Endothelial cell of umbilical vein (primary cell): ENCODE measurements at regions of chr1 and their contacts with region 1.

Region 1: GRCh38 chr1:84944767-84945486 is 51.9 kb upstream of the LPAR3 start:
- DNase-seq: peak; percentile 90
- H3K4me3 ChIP-seq: peak overlapping the region; percentile 37 to 72 (median 68)
- H3K27ac ChIP-seq: peak overlapping the region; percentile 20
- H3K4me1 ChIP-seq: peaks cover 5% of the 10 kb centered on the region
- H3K27me3 ChIP-seq: peaks cover 9 to 15% of the 10 kb centered on the region in 2 experiments
- CTCF ChIP-seq: peak; percentile 68 to 83
- POLR2A ChIP-seq: no peak

Region 2: DNA sequence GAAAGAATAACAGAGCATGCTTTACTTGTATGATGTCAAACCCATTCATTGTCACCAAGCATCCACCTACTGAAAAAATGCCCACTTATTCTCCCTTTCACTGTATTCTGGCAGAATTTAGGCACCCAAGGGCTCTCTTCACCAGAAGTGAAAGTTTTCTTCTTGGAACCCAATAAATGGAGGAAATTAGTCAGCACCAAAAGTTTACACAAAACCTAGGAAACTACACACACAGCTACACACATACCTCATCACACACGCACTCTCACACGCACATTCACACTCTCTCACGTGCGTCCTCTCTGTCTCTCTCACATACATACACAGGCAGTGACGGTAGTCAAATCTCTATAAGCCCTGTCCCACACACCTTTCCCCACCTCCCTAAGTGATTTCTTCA is 14.4 kb after region 1 on chr1:
- CTCF ChIA-PET with region 1: interaction called, 46 read pairs
- POLR2A ChIA-PET with region 1: no interaction called
- dilution Hi-C with region 1: no loop called
- intact Hi-C with region 1: no loop called
- DNase-seq: no peak
- H3K4me3 ChIP-seq: no peak overlapping the region
- H3K27ac ChIP-seq: no peak overlapping the region
- H3K4me1 ChIP-seq: no peaks in the 10 kb centered on the region
- H3K27me3 ChIP-seq: peaks cover 16 to 45% of the 10 kb centered on the region in 2 experiments
- CTCF ChIP-seq: no peak
- POLR2A ChIP-seq: no peak

Region 3: GRCh38 chr1:85027242-85027983 is 82.5 kb after region 1 on chr1:
- CTCF ChIA-PET with region 1: interaction called, 49 read pairs
- POLR2A ChIA-PET with region 1: no interaction called
- dilution Hi-C with region 1: no loop called
- intact Hi-C with region 1: loop called (anchors 2 kb)
- DNase-seq: no peak
- H3K4me3 ChIP-seq: no peak overlapping the region
- H3K27ac ChIP-seq: no peak overlapping the region
- H3K4me1 ChIP-seq: no peaks in the 10 kb centered on the region
- H3K27me3 ChIP-seq: peaks cover 0 to 2% of the 10 kb centered on the region in 2 experiments
- CTCF ChIP-seq: no peak
- POLR2A ChIP-seq: no peak

Region 4: GRCh38 chr1:85109475-85109874 is 164.5 kb after region 1 on chr1:
- CTCF ChIA-PET with region 1: interaction called, 27 read pairs
- POLR2A ChIA-PET with region 1: no interaction called
- dilution Hi-C with region 1: no loop called
- intact Hi-C with region 1: loop called (anchors 1 kb)
- DNase-seq: peak; percentile 71
- H3K4me3 ChIP-seq: no peak overlapping the region
- H3K27ac ChIP-seq: no peak overlapping the region
- H3K4me1 ChIP-seq: no peaks in the 10 kb centered on the region
- H3K27me3 ChIP-seq: peaks cover 8 to 23% of the 10 kb centered on the region in 2 experiments
- CTCF ChIP-seq: peak; percentile 65 to 80
- POLR2A ChIP-seq: no peak

Region 5: DNA sequence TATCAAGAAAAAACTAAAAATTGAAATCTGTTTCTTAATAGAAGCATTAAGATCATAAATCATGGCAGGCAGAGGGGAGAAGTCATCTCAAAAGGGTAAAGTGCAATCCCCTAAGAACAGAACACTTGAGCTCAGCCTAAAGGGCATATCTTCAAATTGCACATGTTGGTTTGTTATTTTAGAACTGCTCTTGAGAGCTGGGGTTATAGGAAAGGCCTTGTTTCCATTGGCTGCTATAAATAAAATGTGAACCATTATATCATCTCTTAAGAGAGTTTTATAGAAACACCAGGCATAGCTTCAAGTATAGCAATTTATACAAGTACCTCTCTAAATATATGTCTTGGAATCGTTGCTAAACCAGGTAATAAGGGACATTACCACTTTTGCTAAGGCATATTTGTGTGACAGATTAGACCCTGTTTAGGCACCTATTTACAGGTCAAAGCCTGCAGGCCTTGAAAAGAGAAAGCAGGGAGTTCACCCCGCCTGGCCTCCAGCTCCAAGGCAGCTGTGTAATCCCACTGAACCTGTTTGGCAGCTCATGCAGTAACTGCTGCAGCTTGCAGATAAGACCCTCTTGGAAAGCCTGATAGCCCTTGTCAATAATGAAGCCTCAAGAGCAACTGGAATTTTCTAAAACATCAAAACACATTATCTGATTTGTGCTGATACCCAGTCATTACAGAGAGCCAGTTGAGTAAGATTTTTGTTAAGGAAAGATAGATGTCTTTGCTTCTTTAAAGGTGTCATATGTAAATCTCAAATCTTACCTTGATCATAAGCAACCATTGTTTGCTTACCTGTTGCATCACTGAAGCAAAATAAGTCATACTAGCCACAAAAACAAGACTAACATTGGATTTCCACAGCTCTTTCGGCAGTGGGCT is 280.1 kb after region 1 on chr1:
- CTCF ChIA-PET with region 1: interaction called, 10 read pairs
- POLR2A ChIA-PET with region 1: no interaction called
- dilution Hi-C with region 1: no loop called
- intact Hi-C with region 1: no loop called
- DNase-seq: no peak
- H3K4me3 ChIP-seq: no peak overlapping the region
- H3K27ac ChIP-seq: no peak overlapping the region
- H3K4me1 ChIP-seq: no peaks in the 10 kb centered on the region
- H3K27me3 ChIP-seq: peaks cover 16 to 27% of the 10 kb centered on the region in 2 experiments
- CTCF ChIP-seq: no peak
- POLR2A ChIP-seq: no peak

Region 6: DNA sequence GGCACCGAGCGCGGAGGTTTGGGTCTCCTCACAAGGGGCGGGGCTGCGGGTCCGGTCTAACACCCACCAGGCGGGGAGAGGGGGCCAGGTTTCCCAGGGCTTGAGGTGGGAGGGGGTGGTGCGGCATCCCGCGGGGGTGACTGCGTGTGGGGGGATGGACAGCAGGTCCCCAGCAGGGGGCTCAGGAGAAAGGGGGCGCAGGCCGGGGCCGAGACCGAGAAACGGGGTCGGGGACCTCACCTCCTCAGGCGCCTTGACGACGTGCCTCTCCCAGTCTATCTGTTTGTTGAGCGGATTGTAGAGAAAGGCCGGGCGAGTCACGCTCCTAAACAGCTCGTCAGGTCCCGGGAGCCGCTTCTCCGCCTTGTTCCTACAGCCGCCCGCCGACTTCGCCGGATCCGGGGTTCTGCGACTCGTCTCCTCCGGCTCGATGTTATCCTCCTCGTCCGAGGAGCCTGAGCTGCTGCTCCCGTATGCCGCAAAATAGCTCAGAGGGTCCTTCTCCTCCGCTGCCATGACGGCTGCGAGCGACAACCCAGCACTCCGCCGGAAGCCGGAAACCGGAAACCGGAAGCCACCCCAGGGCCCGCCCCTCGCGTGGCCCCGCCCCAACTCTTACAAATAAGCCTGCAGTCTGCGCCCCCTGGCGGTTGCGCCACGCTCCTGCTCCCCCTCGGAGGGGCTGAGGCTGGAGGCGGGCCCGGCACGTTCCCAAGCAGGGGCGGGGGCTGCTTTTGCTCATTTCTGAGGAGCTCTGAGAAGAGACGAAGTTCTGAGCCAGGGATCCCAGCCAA is 314.4 kb after region 1 on chr1 and contains the start of gene C1orf52:
- CTCF ChIA-PET with region 1: interaction called, 520 read pairs
- POLR2A ChIA-PET with region 1: interaction called, 4 read pairs
- dilution Hi-C with region 1: no loop called
- intact Hi-C with region 1: loop called (anchors 1 kb)
- DNase-seq: peak; percentile 94
- H3K4me3 ChIP-seq: peak within 1 kb of the TSS; percentile 77 to 90 (median 82)
- H3K27ac ChIP-seq: peak within 1 kb of the TSS; percentile 82
- H3K4me1 ChIP-seq: peaks cover 25% of the 10 kb centered on the region
- H3K27me3 ChIP-seq: no peaks in the 10 kb centered on the region
- CTCF ChIP-seq: peak; percentile 88 to 97
- POLR2A ChIP-seq: peak; percentile 90
- total RNA-seq, gene C1orf52: 26.7 and 29.1 TPM in 2 replicates

Region 7: DNA sequence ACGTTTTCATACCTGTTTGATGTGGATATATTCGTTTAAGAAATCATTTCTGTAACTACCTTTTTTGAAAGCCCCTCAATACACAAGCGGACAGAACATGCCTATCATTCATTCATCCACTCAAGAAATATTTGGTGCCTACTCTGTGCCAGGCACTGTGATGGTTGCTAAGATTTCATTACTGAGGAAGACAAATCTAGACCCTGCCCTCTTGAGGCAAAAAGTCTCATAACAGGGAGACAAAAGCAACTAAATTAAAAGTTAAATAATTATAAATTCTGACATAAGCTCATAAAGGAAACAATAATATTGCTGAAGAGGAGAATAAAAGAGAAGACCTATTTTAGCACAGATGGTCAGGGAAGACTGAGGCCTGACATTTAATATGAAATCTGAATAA is 966.8 kb after region 1 on chr1:
- CTCF ChIA-PET with region 1: interaction called, 13 read pairs
- POLR2A ChIA-PET with region 1: no interaction called
- dilution Hi-C with region 1: no loop called
- intact Hi-C with region 1: no loop called
- DNase-seq: peak; percentile 9
- H3K4me3 ChIP-seq: no peak overlapping the region
- H3K27ac ChIP-seq: no peak overlapping the region
- H3K4me1 ChIP-seq: no peaks in the 10 kb centered on the region
- H3K27me3 ChIP-seq: peaks cover 1 to 30% of the 10 kb centered on the region in 2 experiments
- CTCF ChIP-seq: peak in 1 of 2 donors; percentile 24
- POLR2A ChIP-seq: no peak